Activated CD4-positive, alpha-beta T cell treated with anti-CD3 and anti-CD28 coated beads, Interleukin-2, amount 10 ng/mL, durations not matched to agents 7 days and 5 days (primary cell): ENCODE measurements at regions of chr7 and their contacts with region 1.

Region 1: GRCh38 chr7:151936207-151936606 is 20.0 kb upstream of the GALNTL5 start:
- DNase-seq: peak; percentile 50
- H3K4me3 Mint-ChIP-seq: peak overlapping the region; percentile 59
- H3K27ac Mint-ChIP-seq: peak overlapping the region; percentile 96
- H3K4me1 Mint-ChIP-seq: peaks cover 27% of the 10 kb centered on the region
- H3K27me3 Mint-ChIP-seq: peaks cover 10% of the 10 kb centered on the region

Region 2: DNA sequence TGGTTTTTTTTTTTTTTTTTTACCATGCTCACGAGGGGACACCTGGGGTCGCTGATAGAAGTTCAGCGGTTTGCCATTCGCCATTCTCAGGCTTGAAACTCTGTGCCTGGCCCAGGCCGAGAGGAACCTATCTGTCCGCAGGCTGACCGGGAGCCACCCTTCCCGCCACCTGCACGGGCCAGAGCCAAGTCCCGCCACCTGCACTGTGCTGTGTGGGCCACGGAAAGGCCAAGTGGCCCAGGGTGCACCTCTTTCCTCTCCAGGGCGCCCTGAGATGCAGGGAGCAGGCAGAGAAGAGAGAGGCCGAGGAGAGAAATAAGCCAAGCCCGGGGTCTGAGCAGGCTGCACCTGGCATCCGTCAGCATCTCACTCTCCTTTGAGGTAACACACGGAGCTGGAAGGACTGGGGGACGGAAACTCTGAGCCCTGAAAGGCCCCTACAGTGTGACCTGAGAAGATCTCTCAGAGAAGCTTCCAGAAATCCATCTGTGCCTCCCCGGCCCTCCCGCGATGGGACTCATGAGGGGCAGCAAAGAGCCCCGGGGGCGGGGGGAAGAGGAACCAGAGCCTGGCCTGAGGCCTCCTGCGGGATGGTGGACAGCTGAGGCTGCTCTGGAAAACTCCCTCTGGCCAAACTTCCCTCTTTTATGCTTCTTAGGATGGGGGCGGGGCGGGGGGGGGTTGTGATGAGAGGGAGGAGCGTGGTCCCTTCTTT is 105.9 kb before region 1 on chr7:
- CTCF ChIA-PET with region 1: interaction called, 10 read pairs
- POLR2A ChIA-PET with region 1: no interaction called
- DNase-seq: no peak
- H3K4me3 Mint-ChIP-seq: no peak overlapping the region
- H3K27ac Mint-ChIP-seq: no peak overlapping the region
- H3K4me1 Mint-ChIP-seq: peaks cover 9% of the 10 kb centered on the region
- H3K27me3 Mint-ChIP-seq: no peaks in the 10 kb centered on the region